ENCODE measurements at regions of chr19 and their contacts with region 1.

Region 1: DNA sequence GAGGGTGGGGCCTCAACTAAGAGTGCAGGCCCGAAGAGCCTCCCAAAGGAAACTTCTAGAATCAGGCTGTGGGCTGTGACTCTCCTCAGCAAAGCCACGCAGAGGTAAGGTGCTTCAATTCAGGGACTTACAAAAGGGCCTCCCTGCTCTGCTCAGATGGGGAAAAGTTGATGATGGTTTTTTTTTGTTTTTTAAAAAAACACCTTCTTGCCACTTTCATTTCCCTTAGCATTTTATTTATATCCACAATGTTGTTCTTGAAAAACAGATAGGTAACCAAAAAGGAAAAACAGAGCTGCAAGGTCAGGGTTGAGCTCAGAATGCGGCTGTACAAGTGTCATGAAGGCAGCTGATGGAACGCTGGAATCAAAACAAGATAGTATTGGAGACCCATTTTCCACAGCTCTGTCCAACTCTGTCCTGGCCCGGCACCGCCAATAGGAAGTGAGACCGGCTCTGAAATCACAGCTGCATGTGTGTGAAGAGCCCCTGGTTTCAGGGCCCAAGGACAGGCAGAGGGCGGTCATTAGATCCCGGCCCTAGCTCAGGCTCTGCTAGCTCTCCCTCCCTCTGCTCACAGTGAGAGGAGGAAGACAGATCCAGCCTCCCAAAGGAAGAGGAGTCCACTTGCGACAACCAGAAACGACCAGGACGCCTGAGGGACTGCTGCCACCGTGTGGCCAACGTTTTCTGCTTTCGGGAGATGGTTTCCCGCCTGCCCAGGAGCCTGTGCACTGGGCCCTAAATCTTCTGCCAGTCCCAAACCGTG is 58.3 kb downstream of the KLF2 start:
- DNase-seq: peak; percentile 67 to 97 (median 83)

Region 2: DNA sequence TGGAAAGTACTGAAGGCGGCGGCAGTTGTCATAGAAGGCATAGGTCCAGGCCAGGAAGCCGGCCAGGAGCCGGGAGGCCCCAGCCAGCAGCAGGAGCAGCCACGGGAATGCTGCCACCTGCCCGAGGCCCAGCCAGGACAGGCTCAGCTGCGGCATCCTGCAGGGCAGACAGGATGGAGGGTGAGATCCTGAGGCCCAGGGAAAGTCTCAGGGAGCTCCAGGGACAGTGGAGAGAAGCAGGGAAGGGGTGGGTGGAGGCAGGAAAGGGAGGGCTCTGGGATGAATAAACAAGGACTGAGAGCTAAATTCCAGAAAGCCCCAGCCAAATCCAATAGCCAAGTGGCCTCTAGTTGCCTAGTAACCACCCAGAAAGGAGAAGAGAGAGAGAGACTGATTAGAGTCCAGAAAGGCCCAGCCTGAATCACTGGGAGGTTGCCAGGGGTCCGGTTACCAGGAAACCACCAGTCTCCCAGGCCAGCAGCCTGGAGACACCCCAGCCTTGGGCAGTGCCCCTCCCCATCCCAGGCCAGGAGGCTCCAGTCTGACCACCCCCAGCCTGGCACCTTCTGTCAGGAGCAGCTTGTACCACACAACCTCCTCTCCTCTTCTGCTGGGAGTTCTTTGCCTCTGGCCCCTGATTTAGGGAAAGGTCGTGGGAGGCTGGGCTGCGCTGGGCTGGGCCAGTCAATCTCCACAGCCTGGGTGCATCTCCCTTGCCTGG is 603.0 kb before region 1 on chr19:
- intact Hi-C with region 1: no loop called
- DNase-seq: peak; percentile 72 to 95 (median 78)

Region 3: GRCh38 chr19:16247353-16248182 is 135.4 kb before region 1 on chr19:
- intact Hi-C with region 1: loop called (anchors 1 kb)
- DNase-seq: peak; percentile 57 to 96 (median 81)

Region 4: GRCh38 chr19:16371540-16371986 is 11.4 kb before region 1 on chr19:
- intact Hi-C with region 1: no loop called
- DNase-seq: peak in 3 of 10 donors; percentile 27 to 82 (median 78)

Region 5: GRCh38 chr19:16417660-16418596 is 35.0 kb after region 1 on chr19:
- intact Hi-C with region 1: no loop called
- DNase-seq: peak in 9 of 10 donors; percentile 33 to 93 (median 61)

Region 6: DNA sequence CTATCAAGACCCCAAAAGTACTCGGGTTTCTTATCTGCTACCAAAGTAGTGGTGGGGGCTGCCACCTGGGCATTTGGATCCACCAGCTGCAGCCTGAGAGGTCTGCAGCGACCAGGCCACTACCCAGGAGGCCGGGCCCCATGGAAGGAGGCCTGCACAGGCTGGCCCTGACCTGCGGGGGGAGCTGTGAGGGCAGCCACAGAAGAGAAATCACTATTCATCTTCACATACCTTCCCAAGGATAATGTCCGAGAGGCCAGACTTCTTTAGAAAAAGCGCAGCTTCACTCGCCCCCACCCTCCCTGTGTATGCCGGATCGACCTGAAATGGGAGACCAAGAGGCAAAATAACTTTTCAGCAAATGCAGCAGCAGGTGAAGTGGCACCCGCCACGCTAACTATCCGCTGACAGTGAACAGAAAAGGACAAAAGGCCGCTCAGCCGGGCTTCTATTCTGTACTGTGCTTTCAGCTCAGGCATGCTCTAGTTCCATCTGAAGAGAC is 58.8 kb after region 1 on chr19:
- intact Hi-C with region 1: no loop called
- DNase-seq: no peak

Measured in posterior cingulate gyrus (tissue), 11 donors.